ENCODE measurements at regions of chr19 and their contacts with region 1.

Region 1: DNA sequence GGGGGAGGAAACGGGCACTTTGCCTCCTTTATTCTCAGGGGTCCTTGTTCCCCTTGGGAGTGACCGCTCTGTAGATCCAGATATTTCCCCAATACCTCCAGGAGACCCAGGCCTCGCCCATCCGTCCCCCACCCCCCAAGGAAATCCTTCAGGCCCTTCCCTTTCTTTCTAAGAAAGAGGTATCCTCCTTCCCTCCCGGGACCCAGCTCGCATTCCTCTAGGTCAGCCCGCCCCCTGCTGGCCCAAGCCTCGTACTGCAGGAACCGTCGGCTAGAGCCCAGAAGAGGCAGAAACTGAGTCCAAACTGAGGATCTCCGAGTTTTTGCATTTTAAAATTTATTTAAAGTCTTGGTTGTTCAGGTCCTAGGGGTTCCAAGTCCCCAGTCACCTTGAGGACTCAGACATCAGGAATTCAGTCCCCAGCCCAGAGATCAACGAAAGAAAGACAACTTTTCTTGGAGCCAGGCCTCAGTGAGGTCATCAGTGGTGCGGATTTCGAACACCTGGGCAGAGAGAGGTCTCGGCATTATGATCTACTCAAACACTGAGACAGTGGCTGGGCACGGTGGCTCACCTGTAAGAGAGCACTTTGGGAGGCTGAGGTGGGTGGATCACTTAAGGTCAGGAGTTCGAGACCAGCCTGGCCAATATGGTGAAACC is 7.5 kb upstream of the LRFN1 start:
- DNase-seq: peak; percentile 85
- H3K4me3 ChIP-seq: no peak overlapping the region
- H3K27ac ChIP-seq: no peak overlapping the region
- H3K4me1 ChIP-seq: no peaks in the 10 kb centered on the region
- H3K27me3 ChIP-seq: no peaks in the 10 kb centered on the region
- CTCF ChIP-seq: peak; percentile 99

Region 2: DNA sequence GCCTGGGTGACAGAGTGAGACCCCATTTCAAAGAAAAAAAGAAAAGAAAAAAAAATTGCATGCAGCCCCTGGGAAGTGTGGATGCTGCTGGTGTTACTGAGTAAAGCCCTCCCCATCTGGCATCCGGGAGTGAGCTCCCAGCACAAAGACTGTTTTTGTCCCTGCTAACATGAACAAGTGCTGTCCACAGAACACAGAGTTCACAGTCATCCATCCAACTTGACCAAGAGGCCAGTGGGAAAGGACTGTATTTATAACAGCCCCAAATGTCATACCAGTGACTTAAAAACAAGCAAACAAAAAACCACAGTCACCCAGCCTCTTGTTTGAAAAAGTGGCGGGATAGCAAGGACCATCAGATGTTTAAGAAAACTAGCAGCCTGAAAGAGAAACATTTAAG is 363.4 kb before region 1 on chr19:
- CTCF ChIA-PET with region 1: no interaction called
- POLR2A ChIA-PET with region 1: no interaction called
- intact Hi-C with region 1: loop called (anchors 5 kb)
- DNase-seq: no peak
- H3K4me3 ChIP-seq: no peak overlapping the region
- H3K27ac ChIP-seq: no peak overlapping the region
- H3K4me1 ChIP-seq: no peaks in the 10 kb centered on the region
- H3K27me3 ChIP-seq: no peaks in the 10 kb centered on the region
- CTCF ChIP-seq: no peak

Region 3: GRCh38 chr19:39052243-39052746 is 275.9 kb before region 1 on chr19:
- CTCF ChIA-PET with region 1: no interaction called
- POLR2A ChIA-PET with region 1: no interaction called
- intact Hi-C with region 1: loop called (anchors 5 kb)
- DNase-seq: peak; percentile 49
- H3K4me3 ChIP-seq: no peak overlapping the region
- H3K27ac ChIP-seq: no peak overlapping the region
- H3K4me1 ChIP-seq: no peaks in the 10 kb centered on the region
- H3K27me3 ChIP-seq: no peaks in the 10 kb centered on the region
- CTCF ChIP-seq: peak; percentile 90

Region 4: GRCh38 chr19:39064405-39064804 is 263.8 kb before region 1 on chr19:
- CTCF ChIA-PET with region 1: no interaction called
- POLR2A ChIA-PET with region 1: no interaction called
- intact Hi-C with region 1: no loop called
- DNase-seq: no peak
- H3K4me3 ChIP-seq: no peak overlapping the region
- H3K27ac ChIP-seq: no peak overlapping the region
- H3K4me1 ChIP-seq: no peaks in the 10 kb centered on the region
- H3K27me3 ChIP-seq: no peaks in the 10 kb centered on the region
- CTCF ChIP-seq: no peak

Region 5: GRCh38 chr19:39124136-39124764 is 203.9 kb before region 1 on chr19:
- CTCF ChIA-PET with region 1: interaction called, 14 read pairs
- POLR2A ChIA-PET with region 1: no interaction called
- intact Hi-C with region 1: loop called (anchors 1 kb)
- DNase-seq: no peak
- H3K4me3 ChIP-seq: no peak overlapping the region
- H3K27ac ChIP-seq: no peak overlapping the region
- H3K4me1 ChIP-seq: no peaks in the 10 kb centered on the region
- H3K27me3 ChIP-seq: no peaks in the 10 kb centered on the region
- CTCF ChIP-seq: no peak

Region 6: GRCh38 chr19:39212375-39212742 is 115.8 kb before region 1 on chr19:
- CTCF ChIA-PET with region 1: interaction called, 5 read pairs
- POLR2A ChIA-PET with region 1: no interaction called
- intact Hi-C with region 1: loop called (anchors 1 kb)
- DNase-seq: peak; percentile 48
- H3K4me3 ChIP-seq: no peak overlapping the region
- H3K27ac ChIP-seq: no peak overlapping the region
- H3K4me1 ChIP-seq: no peaks in the 10 kb centered on the region
- H3K27me3 ChIP-seq: no peaks in the 10 kb centered on the region
- CTCF ChIP-seq: peak; percentile 58

Region 7: GRCh38 chr19:39502640-39503417 is 174.7 kb after region 1 on chr19:
- CTCF ChIA-PET with region 1: interaction called, 18 read pairs
- POLR2A ChIA-PET with region 1: no interaction called
- intact Hi-C with region 1: no loop called
- DNase-seq: peak; percentile 91
- H3K4me3 ChIP-seq: no peak overlapping the region
- H3K27ac ChIP-seq: no peak overlapping the region
- H3K4me1 ChIP-seq: peaks cover 14% of the 10 kb centered on the region
- H3K27me3 ChIP-seq: peaks cover 26% of the 10 kb centered on the region
- CTCF ChIP-seq: peak; percentile 66

Measured in A673 (cell line).